HCT116 (cell line): ENCODE measurements at regions of chr12 and their contacts with region 1.

Region 1: DNA sequence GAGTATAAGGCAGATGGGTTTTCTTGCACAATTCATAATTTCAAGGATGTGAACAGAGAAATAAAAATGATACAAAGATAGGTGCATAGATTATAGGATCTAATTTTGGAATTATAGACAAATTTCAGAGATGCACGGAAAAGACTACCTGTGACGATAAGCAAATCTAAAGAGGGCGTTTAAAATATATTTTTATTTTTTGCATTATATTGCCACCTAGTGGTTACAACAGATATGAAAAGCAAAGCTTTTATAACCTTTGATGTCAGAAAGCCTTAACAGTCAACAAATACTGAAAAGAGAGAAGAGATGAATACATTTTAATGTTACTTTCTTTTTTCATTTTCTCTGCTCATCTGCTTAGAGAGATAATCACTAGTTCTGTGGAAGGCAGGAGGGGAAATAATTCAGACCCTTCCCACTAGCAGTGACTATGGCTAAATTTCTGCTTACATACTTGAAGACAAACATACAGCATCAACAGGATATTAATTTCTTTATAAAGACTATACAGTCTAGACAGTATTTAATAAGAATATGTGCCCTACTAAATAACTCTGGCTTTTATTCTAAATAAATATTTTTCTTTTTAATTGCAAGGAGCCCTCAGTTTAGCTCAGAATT is 46.3 kb downstream of the NTS start:
- DNase-seq: peak; percentile 26
- ATAC-seq: peak; percentile 70
- H3K4me3 ChIP-seq: no peak overlapping the region
- H3K27ac ChIP-seq: no peak overlapping the region
- H3K4me1 ChIP-seq: no peaks in the 10 kb centered on the region
- H3K27me3 ChIP-seq: no peaks in the 10 kb centered on the region
- CTCF ChIP-seq: peak; percentile 41 to 61 (median 49); a peak in 4 of 6 replicates
- POLR2A ChIP-seq: no peak
- RAD21 ChIP-seq: peak; percentile 73

Region 2: DNA sequence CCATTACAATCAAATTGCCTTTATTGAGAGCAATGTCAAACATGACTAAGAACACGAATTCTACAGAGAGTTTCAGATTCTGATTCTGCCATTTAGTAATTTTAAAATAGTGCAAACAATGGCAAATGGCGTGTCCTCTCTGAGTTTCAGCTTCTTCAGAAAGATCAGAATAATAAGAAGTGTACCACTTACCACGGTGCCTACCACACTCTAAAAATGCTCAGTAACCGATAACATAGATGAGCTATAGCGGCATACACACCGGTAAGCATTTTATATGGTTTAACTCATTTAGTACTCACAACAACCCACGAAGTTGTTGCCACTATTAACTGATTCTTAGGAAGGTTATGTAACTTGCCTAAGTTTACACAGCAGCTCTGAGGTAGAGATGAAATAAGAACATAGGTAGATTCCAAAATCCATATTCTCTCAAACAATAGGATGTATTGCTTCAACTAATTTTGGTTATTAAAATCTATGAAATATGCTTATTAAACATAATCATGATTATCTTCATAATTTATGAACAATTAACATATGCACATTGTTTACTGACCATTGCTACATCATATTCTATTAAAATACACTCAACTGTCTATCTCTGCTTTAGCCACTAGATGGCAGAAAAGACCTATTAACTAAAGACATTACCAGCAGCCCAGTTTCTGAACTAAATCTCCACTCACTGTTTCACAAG is 1046.2 kb before region 1 on chr12:
- CTCF ChIA-PET with region 1: no interaction called
- POLR2A ChIA-PET with region 1: no interaction called
- RAD21 ChIA-PET with region 1: no interaction called
- intact Hi-C with region 1: loop called (anchors 10 kb)
- DNase-seq: peak; percentile 55
- ATAC-seq: peak; percentile 84
- H3K4me3 ChIP-seq: no peak overlapping the region
- H3K27ac ChIP-seq: no peak overlapping the region
- H3K4me1 ChIP-seq: no peaks in the 10 kb centered on the region
- H3K27me3 ChIP-seq: no peaks in the 10 kb centered on the region
- CTCF ChIP-seq: peak; percentile 58 to 84 (median 80)
- POLR2A ChIP-seq: no peak
- RAD21 ChIP-seq: peak; percentile 88

Region 3: DNA sequence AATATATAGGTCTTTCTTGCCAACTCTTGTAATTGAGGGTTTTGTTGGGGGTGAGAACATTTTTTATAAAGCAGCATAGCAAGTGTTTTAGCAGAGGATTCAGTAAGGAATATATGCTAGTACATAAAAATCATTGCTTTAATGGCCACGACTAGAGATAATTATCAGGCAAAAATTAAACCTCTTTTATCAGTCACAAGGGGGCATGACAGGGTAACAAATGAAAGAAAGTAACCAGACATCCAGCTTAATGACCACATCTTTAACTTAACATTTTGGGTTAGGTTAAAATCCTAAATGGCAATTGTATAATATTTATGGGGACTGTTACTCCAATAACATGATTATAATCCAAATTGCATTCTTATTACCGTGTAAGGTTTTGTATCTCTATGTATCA is 764.6 kb before region 1 on chr12:
- CTCF ChIA-PET with region 1: no interaction called
- POLR2A ChIA-PET with region 1: no interaction called
- RAD21 ChIA-PET with region 1: no interaction called
- intact Hi-C with region 1: loop called (anchors 2 kb)
- DNase-seq: peak; percentile 31
- ATAC-seq: peak; percentile 63
- H3K4me3 ChIP-seq: no peak overlapping the region
- H3K27ac ChIP-seq: no peak overlapping the region
- H3K4me1 ChIP-seq: no peaks in the 10 kb centered on the region
- H3K27me3 ChIP-seq: no peaks in the 10 kb centered on the region
- CTCF ChIP-seq: peak; percentile 29 to 62 (median 42); a peak in 4 of 6 replicates
- POLR2A ChIP-seq: no peak
- RAD21 ChIP-seq: peak; percentile 67

Region 4: DNA sequence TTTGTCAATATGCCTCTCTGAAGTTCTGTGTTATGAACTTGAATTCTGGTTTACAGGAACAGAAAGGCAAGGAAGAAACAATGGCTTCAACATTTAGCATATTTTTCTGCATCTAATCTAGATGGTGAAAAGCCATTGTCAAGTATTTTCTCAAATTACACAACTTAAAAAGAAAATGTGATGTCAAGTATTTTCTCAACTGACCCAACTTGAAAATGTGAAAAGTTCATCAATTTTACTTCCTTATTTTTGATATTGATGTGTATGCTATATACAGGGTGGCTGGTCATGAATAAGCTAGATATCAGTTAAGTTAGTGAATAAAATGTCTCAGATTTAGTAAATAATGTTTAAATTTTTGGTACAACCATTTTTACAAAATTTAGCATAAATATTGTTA is 443.7 kb before region 1 on chr12:
- CTCF ChIA-PET with region 1: interaction called, 10 read pairs
- POLR2A ChIA-PET with region 1: no interaction called
- RAD21 ChIA-PET with region 1: interaction called in 1 of 2 experiments, 3 read pairs
- intact Hi-C with region 1: no loop called
- DNase-seq: no peak
- ATAC-seq: no peak
- H3K4me3 ChIP-seq: no peak overlapping the region
- H3K27ac ChIP-seq: no peak overlapping the region
- H3K4me1 ChIP-seq: no peaks in the 10 kb centered on the region
- H3K27me3 ChIP-seq: no peaks in the 10 kb centered on the region
- CTCF ChIP-seq: no peak
- POLR2A ChIP-seq: no peak
- RAD21 ChIP-seq: no peak

Region 5: DNA sequence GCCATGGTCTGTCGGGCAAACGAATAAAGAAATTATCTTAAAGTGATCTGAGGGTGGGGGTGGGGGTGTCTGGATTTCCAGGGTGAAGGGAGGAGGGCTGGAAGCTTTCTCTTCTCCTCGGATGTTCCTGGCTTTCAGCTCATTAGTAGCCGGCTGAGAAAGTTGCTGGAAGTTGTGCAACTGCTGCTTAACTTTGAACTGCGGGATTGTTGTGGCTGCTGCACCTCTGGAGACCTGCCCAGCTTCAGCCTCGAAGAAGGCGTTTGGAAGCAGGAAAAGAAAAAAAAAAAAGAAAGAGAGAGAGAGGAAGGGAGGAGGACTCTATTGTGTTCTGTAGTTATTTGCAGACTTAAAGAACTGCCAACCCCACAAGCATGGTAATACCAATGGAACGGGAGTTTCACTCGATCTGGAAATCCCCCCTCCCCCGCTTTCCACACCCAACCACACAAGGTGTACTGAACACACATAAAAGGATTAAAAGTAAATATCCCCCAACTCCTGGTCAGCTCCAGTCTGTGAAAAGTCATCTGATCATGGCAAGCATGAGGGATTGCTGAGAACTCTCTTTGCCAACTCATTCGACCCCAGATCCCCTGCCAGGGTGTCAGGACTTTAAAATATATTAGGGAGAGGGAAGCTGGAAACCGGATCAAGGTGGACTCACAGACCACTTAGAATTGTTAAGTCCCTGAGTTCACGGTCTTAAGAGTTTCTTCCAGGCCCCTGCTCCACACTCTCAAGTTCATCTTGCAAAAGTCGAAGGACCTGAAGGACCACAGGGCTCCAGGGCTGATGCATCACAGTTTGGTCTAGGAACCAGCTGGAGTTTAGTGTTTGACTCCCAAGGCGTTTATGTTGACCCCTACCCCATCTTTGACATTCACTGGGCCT is 84.0 kb before region 1 on chr12 and contains the start of gene RASSF9:
- CTCF ChIA-PET with region 1: no interaction called
- POLR2A ChIA-PET with region 1: no interaction called
- RAD21 ChIA-PET with region 1: no interaction called
- intact Hi-C with region 1: no loop called
- DNase-seq: no peak
- ATAC-seq: no peak
- H3K4me3 ChIP-seq: no peak within 1 kb of the TSS
- H3K27ac ChIP-seq: no peak within 1 kb of the TSS
- H3K4me1 ChIP-seq: no peaks in the 10 kb centered on the region
- H3K27me3 ChIP-seq: no peaks in the 10 kb centered on the region
- CTCF ChIP-seq: no peak
- POLR2A ChIP-seq: no peak
- RAD21 ChIP-seq: no peak
- total RNA-seq, gene RASSF9: not detected

Region 6: GRCh38 chr12:85894653-85895052 is 25.8 kb before region 1 on chr12:
- CTCF ChIA-PET with region 1: no interaction called
- POLR2A ChIA-PET with region 1: no interaction called
- RAD21 ChIA-PET with region 1: no interaction called
- intact Hi-C with region 1: no loop called
- DNase-seq: no peak
- ATAC-seq: no peak
- H3K4me3 ChIP-seq: no peak overlapping the region
- H3K27ac ChIP-seq: no peak overlapping the region
- H3K4me1 ChIP-seq: no peaks in the 10 kb centered on the region
- H3K27me3 ChIP-seq: no peaks in the 10 kb centered on the region
- CTCF ChIP-seq: no peak
- POLR2A ChIP-seq: no peak
- RAD21 ChIP-seq: no peak

Region 7: GRCh38 chr12:85951823-85952222 is 31.4 kb after region 1 on chr12:
- CTCF ChIA-PET with region 1: interaction called, 16 read pairs
- POLR2A ChIA-PET with region 1: no interaction called
- RAD21 ChIA-PET with region 1: no interaction called
- intact Hi-C with region 1: loop called (anchors 2 kb)
- DNase-seq: peak; percentile 19
- ATAC-seq: no peak
- H3K4me3 ChIP-seq: no peak overlapping the region
- H3K27ac ChIP-seq: no peak overlapping the region
- H3K4me1 ChIP-seq: no peaks in the 10 kb centered on the region
- H3K27me3 ChIP-seq: no peaks in the 10 kb centered on the region
- CTCF ChIP-seq: peak; percentile 34 to 64 (median 40); a peak in 4 of 6 replicates
- POLR2A ChIP-seq: no peak
- RAD21 ChIP-seq: peak; percentile 65